ENCODE measurements at regions of chr2 and their contacts with region 1.

Region 1: DNA sequence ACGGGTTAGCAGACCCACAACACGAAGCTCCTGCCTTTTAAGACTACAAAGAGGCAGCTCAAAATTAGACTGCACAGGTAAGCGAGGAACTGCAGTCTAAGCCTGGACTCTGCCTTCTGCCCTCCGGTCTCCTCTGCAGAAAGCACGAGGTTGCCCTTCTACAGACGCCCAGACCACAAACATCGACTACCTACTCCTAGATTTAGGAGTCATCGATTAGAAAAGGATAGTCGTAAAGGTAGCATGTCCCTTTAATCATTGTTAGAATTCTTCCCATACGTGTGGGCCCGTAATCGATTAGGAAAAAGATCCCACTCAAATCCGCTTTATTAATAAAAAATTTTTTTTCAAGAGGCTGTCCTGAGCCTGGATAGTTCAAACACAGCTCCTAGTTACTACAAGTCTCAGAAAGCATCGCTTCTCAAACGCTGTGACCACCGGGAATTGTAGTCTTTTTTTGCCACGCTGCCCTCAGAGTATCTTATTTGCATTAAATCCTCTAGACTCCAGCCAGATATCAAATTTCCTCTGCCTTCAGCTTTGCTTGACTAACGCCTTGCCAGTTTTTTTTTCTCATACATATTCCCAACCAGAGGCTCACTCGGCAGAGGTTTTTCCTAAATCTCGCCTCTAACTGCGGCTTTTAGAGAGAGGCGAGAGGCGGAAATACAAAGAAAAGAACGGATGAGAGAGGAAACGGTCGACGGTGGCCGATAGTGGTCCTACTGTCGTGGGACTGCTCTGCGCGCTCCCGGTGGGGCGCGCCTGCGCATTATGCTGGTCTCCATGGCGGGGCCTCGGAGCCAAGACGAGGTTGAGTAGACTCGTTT is at the starts of genes CARF and WDR12:
- DNase-seq: peak; percentile 87 to 92 (median 89)
- H3K4me3 ChIP-seq: peak within 1 kb of the TSS; percentile 65 to 99 (median 95)
- H3K4me3 Mint-ChIP-seq: peak within 1 kb of the TSS; percentile 97
- H3K27ac ChIP-seq: peak within 1 kb of the TSS; percentile 76 to 81
- H3K27ac Mint-ChIP-seq: peak within 1 kb of the TSS; percentile 91 to 99 (median 97)
- H3K4me1 ChIP-seq: peaks cover 19 to 22% of the 10 kb centered on the region in 2 donors
- H3K4me1 Mint-ChIP-seq: peaks cover 32% of the 10 kb centered on the region
- H3K27me3 ChIP-seq: no peaks in the 10 kb centered on the region
- H3K27me3 Mint-ChIP-seq: no peaks in the 10 kb centered on the region
- CTCF ChIP-seq: no peak
- polyA plus RNA-seq, gene CARF: 1.1 to 4.6 (median 2.8) TPM
- polyA plus RNA-seq, gene WDR12: 4.1 to 14.6 (median 6.5) TPM

Region 2: GRCh38 chr2:202602285-202602684 is 309.4 kb before region 1 on chr2:
- intact Hi-C with region 1: no loop called
- DNase-seq: no peak
- H3K4me3 ChIP-seq: no peak overlapping the region
- H3K4me3 Mint-ChIP-seq: no peak overlapping the region
- H3K27ac ChIP-seq: no peak overlapping the region
- H3K27ac Mint-ChIP-seq: no peak overlapping the region
- H3K4me1 ChIP-seq: no peaks in the 10 kb centered on the region
- H3K4me1 Mint-ChIP-seq: peaks cover 6% of the 10 kb centered on the region
- H3K27me3 ChIP-seq: no peaks in the 10 kb centered on the region
- H3K27me3 Mint-ChIP-seq: peaks cover 0 to 1% (median 0%) of the 10 kb centered on the region in 3 donors
- CTCF ChIP-seq: no peak

Region 3: GRCh38 chr2:202950592-202950991 is 38.9 kb after region 1 on chr2:
- intact Hi-C with region 1: loop called in 1 of 2 experiments (anchors 5 kb)
- DNase-seq: peak; percentile 79 to 88 (median 87)
- H3K4me3 ChIP-seq: no peak overlapping the region
- H3K4me3 Mint-ChIP-seq: no peak overlapping the region
- H3K27ac ChIP-seq: peak overlapping the region in 1 of 2 donors; percentile 20
- H3K27ac Mint-ChIP-seq: peak overlapping the region in 5 of 7 donors; percentile 15 to 65 (median 37)
- H3K4me1 ChIP-seq: no peaks in the 10 kb centered on the region
- H3K4me1 Mint-ChIP-seq: peaks cover 5% of the 10 kb centered on the region
- H3K27me3 ChIP-seq: no peaks in the 10 kb centered on the region
- H3K27me3 Mint-ChIP-seq: no peaks in the 10 kb centered on the region
- CTCF ChIP-seq: no peak

Region 4: DNA sequence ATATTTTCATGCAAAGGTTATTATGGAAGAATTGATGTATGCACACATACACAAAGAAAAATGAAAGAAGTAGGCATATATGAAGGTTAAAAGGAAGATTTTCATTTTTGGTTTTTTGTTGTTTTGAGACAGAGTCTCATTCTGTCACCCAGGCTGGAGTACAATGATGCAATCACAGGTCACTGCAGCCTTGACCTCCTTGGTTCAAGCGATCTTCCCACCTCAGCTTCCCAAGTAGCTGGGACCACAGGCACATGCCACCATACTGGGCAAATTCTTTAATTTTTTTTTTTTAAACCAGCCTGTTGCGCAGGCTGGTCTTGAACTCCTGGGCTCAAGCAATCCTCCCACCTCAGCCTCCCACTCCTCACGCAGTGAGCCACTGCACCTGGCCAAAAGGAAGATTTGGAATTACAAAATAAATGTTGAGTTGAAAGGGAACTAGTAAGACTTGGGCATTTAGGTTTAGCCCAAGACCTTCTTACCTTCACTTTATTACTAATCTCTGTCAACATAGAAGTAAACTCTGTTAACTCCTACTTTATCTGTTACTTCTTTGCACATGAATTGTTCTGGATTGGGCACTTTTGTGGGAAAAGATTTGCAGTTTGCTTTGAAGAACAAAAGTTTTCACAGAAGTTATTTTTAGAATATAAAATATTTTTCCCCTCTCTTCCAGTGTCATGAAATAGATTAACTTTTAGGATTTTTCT is 71.2 kb after region 1 on chr2:
- intact Hi-C with region 1: no loop called
- DNase-seq: no peak
- H3K4me3 ChIP-seq: no peak overlapping the region
- H3K4me3 Mint-ChIP-seq: no peak overlapping the region
- H3K27ac ChIP-seq: no peak overlapping the region
- H3K27ac Mint-ChIP-seq: peak overlapping the region in 2 of 7 donors; percentile 16 to 25
- H3K4me1 ChIP-seq: no peaks in the 10 kb centered on the region
- H3K4me1 Mint-ChIP-seq: no peaks in the 10 kb centered on the region
- H3K27me3 ChIP-seq: no peaks in the 10 kb centered on the region
- H3K27me3 Mint-ChIP-seq: no peaks in the 10 kb centered on the region
- CTCF ChIP-seq: no peak

Region 5: GRCh38 chr2:203077448-203077847 is 165.7 kb after region 1 on chr2:
- intact Hi-C with region 1: no loop called
- DNase-seq: no peak
- H3K4me3 ChIP-seq: no peak overlapping the region
- H3K4me3 Mint-ChIP-seq: no peak overlapping the region
- H3K27ac ChIP-seq: no peak overlapping the region
- H3K27ac Mint-ChIP-seq: no peak overlapping the region
- H3K4me1 ChIP-seq: peaks cover 0 to 4% of the 10 kb centered on the region in 2 donors
- H3K4me1 Mint-ChIP-seq: peaks cover 3% of the 10 kb centered on the region
- H3K27me3 ChIP-seq: no peaks in the 10 kb centered on the region
- H3K27me3 Mint-ChIP-seq: no peaks in the 10 kb centered on the region
- CTCF ChIP-seq: no peak

Measured in CD14-positive monocyte (primary cell).